ENCODE measurements at regions of chr15 and their contacts with region 1.

Region 1: GRCh38 chr15:63466378-63467192 is 37.8 kb upstream of the USP3 start:
- DNase-seq: no peak
- ATAC-seq: peak; percentile 93
- H3K4me3 Mint-ChIP-seq: no peak overlapping the region
- H3K27ac Mint-ChIP-seq: no peak overlapping the region
- H3K4me1 Mint-ChIP-seq: peaks cover 29% of the 10 kb centered on the region
- H3K27me3 Mint-ChIP-seq: no peaks in the 10 kb centered on the region
- CTCF ChIP-seq: peak; percentile 56

Region 2: DNA sequence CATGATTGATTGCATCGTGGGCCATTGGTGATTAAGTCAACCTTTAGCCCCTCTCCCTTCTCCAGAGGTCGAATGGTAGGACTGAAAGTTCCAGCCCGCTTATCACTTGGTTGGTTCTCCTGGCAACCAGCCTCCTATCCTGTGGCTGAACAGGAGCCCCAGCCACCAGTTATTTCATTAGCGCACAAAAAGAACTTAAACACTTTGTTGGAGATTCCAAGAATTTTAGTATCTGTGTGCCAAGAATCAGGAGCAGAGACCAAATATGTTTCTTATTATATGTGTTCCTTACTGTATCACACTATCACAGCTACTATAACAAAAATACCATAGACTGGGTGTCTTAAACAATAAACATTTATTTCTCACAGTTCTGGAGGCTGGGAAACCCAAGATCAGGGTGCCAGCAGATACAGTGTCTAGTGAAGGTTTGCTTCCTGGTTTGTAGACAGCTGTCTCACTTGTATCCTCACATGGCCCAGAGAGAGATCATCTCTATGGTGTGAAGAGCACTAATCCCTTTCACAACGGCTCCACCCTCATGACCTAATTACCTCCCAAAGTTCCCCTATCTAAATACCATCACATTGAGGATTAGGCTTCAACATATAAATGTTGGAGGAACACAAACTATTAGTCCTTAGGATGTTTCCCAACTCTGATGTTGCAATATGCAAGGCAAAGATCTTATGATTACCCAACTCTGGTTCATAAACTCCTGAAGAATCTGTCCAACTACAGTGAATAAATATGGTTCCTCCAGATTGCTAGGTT is 219.7 kb before region 1 on chr15:
- CTCF ChIA-PET with region 1: no interaction called
- POLR2A ChIA-PET with region 1: no interaction called
- intact Hi-C with region 1: no loop called
- DNase-seq: no peak
- ATAC-seq: no peak
- H3K4me3 Mint-ChIP-seq: no peak overlapping the region
- H3K27ac Mint-ChIP-seq: no peak overlapping the region
- H3K4me1 Mint-ChIP-seq: peaks cover 27% of the 10 kb centered on the region
- H3K27me3 Mint-ChIP-seq: no peaks in the 10 kb centered on the region
- CTCF ChIP-seq: no peak

Region 3: GRCh38 chr15:63402498-63403253 is 63.9 kb before region 1 on chr15:
- CTCF ChIA-PET with region 1: no interaction called
- POLR2A ChIA-PET with region 1: no interaction called
- intact Hi-C with region 1: no loop called
- DNase-seq: no peak
- ATAC-seq: peak; percentile 34
- H3K4me3 Mint-ChIP-seq: no peak overlapping the region
- H3K27ac Mint-ChIP-seq: no peak overlapping the region
- H3K4me1 Mint-ChIP-seq: peaks cover 8% of the 10 kb centered on the region
- H3K27me3 Mint-ChIP-seq: no peaks in the 10 kb centered on the region
- CTCF ChIP-seq: no peak

Region 4: DNA sequence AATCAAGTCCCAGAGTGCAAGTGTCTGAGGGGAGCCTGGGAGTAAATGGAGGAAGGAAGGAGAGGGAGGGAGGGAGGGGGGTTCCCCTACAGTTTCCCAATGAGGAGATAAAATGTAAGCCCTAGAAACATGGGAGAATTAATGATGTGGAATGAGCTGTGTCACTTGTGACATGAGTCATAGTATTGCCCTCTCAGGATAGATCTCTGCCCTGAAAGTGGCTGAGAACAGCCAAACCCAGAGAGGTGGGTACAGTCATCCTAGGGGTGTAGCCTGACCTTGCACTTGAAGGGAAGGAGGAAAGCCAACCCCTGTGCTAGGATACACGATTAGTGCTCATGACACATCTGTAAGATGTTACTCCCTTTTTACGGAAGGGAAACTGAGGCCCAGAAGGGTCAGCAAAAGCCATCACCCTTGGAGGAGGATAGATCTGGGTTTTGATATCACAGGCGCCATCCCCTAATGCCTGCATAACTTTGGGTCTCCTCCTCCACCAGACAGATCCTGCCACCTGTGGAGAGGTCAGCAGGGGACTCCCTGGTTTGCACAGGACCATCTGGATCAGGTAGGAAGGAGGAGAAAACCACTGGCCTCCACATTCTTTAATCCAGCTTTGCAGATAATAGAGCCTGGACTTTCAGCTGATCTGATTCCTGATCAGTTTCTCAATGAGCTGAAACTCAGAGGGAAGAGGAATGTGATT is 14.7 kb after region 1 on chr15:
- CTCF ChIA-PET with region 1: interaction called, 18 read pairs
- POLR2A ChIA-PET with region 1: interaction called, 7 read pairs
- intact Hi-C with region 1: loop called (anchors 2 kb)
- DNase-seq: no peak
- ATAC-seq: peak; percentile 59
- H3K4me3 Mint-ChIP-seq: peak overlapping the region; percentile 74
- H3K27ac Mint-ChIP-seq: peak overlapping the region; percentile 97
- H3K4me1 Mint-ChIP-seq: peaks cover 92% of the 10 kb centered on the region
- H3K27me3 Mint-ChIP-seq: no peaks in the 10 kb centered on the region
- CTCF ChIP-seq: no peak

Region 5: DNA sequence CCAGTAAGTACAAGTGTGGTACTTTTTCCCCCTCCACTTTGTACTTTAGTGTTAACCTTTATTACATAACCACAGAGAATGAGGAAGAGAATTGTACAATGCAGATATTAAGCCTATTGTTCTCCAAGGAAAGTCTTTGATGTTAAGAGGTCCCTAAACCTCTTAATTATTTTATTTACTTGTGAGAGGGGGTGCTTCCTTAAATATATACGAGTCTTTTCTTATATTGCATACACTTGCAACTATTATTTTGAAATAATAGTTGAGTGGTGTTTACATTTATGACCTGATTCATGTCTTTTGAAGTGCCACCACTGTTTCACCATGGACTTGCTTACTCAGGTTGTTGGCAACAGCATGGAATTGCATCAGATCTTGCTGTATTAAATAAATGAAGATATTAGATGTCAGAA is 48.0 kb after region 1 on chr15:
- CTCF ChIA-PET with region 1: interaction called, 12 read pairs
- POLR2A ChIA-PET with region 1: no interaction called
- intact Hi-C with region 1: no loop called
- DNase-seq: no peak
- ATAC-seq: no peak
- H3K4me3 Mint-ChIP-seq: no peak overlapping the region
- H3K27ac Mint-ChIP-seq: peak overlapping the region; percentile 66
- H3K4me1 Mint-ChIP-seq: peaks cover 92% of the 10 kb centered on the region
- H3K27me3 Mint-ChIP-seq: no peaks in the 10 kb centered on the region
- CTCF ChIP-seq: no peak

Region 6: GRCh38 chr15:63553388-63553791 is 86.8 kb after region 1 on chr15:
- CTCF ChIA-PET with region 1: interaction called, 19 read pairs
- POLR2A ChIA-PET with region 1: interaction called, 3 read pairs
- intact Hi-C with region 1: no loop called
- DNase-seq: no peak
- ATAC-seq: no peak
- H3K4me3 Mint-ChIP-seq: no peak overlapping the region
- H3K27ac Mint-ChIP-seq: peak overlapping the region; percentile 44
- H3K4me1 Mint-ChIP-seq: peaks cover 28% of the 10 kb centered on the region
- H3K27me3 Mint-ChIP-seq: no peaks in the 10 kb centered on the region
- CTCF ChIP-seq: no peak

Region 7: GRCh38 chr15:63610200-63610841 is 143.7 kb after region 1 on chr15:
- CTCF ChIA-PET with region 1: interaction called, 19 read pairs
- POLR2A ChIA-PET with region 1: interaction called, 6 read pairs
- intact Hi-C with region 1: loop called (anchors 2 kb)
- DNase-seq: no peak
- ATAC-seq: peak; percentile 91
- H3K4me3 Mint-ChIP-seq: peak overlapping the region; percentile 21
- H3K27ac Mint-ChIP-seq: peak overlapping the region; percentile 88
- H3K4me1 Mint-ChIP-seq: peaks cover 26% of the 10 kb centered on the region
- H3K27me3 Mint-ChIP-seq: no peaks in the 10 kb centered on the region
- CTCF ChIP-seq: no peak

Measured in activated B cell treated with CpG ODN at 0.5 μM for 24 hours (primary cell).